Breast epithelium (tissue), 4 donors: ENCODE measurements at regions of chr2 and their contacts with region 1.

Region 1: GRCh38 chr2:55649211-55649610 is 31.8 kb upstream of the PPP4R3B start:
- DNase-seq: no peak
- H3K4me3 ChIP-seq: no peak overlapping the region
- H3K27ac ChIP-seq: no peak overlapping the region
- H3K4me1 ChIP-seq: no peaks in the 10 kb centered on the region
- H3K27me3 ChIP-seq: no peaks in the 10 kb centered on the region
- CTCF ChIP-seq: no peak
- POLR2A ChIP-seq: no peak

Region 2: DNA sequence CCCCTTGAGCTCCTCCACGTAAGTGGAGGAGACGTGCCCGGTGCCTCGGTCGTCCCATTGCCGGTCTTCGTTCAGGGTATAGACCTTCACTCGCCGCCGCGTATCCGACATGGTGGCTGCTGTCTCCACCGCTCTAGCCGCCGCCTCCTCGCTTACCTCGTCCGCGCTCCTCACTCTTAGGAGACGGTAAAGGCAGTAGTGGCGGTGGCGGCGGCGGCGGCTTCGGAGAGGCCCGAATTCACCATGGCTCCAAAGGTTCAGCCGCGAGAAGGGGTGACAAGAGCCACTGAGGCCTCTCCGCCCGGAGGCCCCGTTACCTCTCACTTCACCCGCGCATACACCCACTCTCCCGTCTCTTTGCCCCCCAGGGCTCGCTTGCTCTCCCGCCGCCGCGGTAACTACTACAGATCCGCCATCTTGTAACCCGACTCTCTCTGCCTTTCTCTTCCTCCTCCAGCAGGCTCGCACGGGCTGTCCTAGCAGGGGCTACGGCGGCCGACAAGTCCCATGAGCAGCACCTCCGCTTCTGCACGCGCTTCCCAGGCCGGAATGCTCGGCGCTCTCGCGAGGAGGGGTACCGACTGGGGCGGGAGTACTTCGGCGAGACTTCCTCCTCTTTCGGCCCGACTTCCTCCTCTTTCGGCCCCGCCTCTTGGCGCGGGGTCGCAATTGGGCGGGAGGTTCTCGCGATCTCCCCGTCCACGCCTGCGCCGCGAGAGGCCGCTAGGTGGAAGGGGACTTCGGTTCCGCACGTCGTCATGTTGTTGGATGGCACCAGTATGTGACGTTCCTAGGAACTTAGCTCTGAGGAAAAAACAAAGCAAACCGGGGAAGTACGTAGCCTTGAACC is 31.8 kb before region 1 on chr2 and contains the start of gene PPP4R3B:
- intact Hi-C with region 1: no loop called
- DNase-seq: peak; percentile 98 to 99
- H3K4me3 ChIP-seq: peak within 1 kb of the TSS; percentile 95 to 100 (median 99)
- H3K27ac ChIP-seq: peak within 1 kb of the TSS; percentile 99 to 100
- H3K4me1 ChIP-seq: no peaks in the 10 kb centered on the region
- H3K27me3 ChIP-seq: no peaks in the 10 kb centered on the region
- CTCF ChIP-seq: peak; percentile 80 to 92 (median 85)
- POLR2A ChIP-seq: peak; percentile 92
- total RNA-seq, gene PPP4R3B: 56.4 to 91.3 (median 71.4) TPM

Region 3: GRCh38 chr2:55693181-55694134 is 44.2 kb after region 1 on chr2 and contains the start of gene PNPT1:
- intact Hi-C with region 1: loop called (anchors 2 kb)
- DNase-seq: peak; percentile 85 to 89
- H3K4me3 ChIP-seq: peak within 1 kb of the TSS; percentile 56 to 83 (median 65)
- H3K27ac ChIP-seq: peak within 1 kb of the TSS; percentile 29 to 64
- H3K4me1 ChIP-seq: no peaks in the 10 kb centered on the region
- H3K27me3 ChIP-seq: no peaks in the 10 kb centered on the region
- CTCF ChIP-seq: no peak
- POLR2A ChIP-seq: no peak
- total RNA-seq, gene PNPT1: 11.5 to 24.9 (median 21.8) TPM